ENCODE measurements at regions of chr7 and their contacts with region 1.

Region 1: DNA sequence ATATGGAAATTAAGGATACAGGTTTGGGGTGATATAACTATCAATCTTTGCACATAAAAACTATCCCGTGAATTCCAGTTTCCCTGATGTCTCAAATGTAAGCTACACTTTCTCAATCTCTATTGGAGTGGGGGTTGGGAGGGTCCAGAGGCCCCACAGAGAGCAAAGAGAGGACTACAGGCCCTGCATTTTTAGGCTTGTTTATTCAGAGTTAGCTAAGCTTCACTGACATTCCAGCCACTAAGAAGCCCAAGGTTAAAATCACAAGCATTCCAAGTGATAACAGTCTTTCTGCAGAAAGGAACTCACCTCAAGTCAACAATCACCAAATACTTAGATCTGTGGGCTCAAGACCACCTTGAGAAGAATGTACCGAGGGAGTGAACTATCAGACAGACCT is 31.6 kb upstream of the LAMB1 start:
- DNase-seq: peak; percentile 82 to 85
- H3K4me3 ChIP-seq: no peak overlapping the region
- H3K4me3 Mint-ChIP-seq: peak overlapping the region; percentile 64
- H3K27ac Mint-ChIP-seq: peak overlapping the region; percentile 82
- H3K4me1 ChIP-seq: peaks cover 71% of the 10 kb centered on the region
- H3K4me1 Mint-ChIP-seq: peaks cover 46% of the 10 kb centered on the region
- H3K27me3 ChIP-seq: no peaks in the 10 kb centered on the region
- H3K27me3 Mint-ChIP-seq: no peaks in the 10 kb centered on the region
- CTCF ChIP-seq: no peak

Region 2: GRCh38 chr7:107785926-107786325 is 248.7 kb before region 1 on chr7:
- CTCF ChIA-PET with region 1: no interaction called
- POLR2A ChIA-PET with region 1: no interaction called
- intact Hi-C with region 1: no loop called
- DNase-seq: no peak
- H3K4me3 ChIP-seq: no peak overlapping the region
- H3K4me3 Mint-ChIP-seq: no peak overlapping the region
- H3K27ac Mint-ChIP-seq: no peak overlapping the region
- H3K4me1 ChIP-seq: no peaks in the 10 kb centered on the region
- H3K4me1 Mint-ChIP-seq: no peaks in the 10 kb centered on the region
- H3K27me3 ChIP-seq: no peaks in the 10 kb centered on the region
- H3K27me3 Mint-ChIP-seq: no peaks in the 10 kb centered on the region
- CTCF ChIP-seq: no peak

Region 3: DNA sequence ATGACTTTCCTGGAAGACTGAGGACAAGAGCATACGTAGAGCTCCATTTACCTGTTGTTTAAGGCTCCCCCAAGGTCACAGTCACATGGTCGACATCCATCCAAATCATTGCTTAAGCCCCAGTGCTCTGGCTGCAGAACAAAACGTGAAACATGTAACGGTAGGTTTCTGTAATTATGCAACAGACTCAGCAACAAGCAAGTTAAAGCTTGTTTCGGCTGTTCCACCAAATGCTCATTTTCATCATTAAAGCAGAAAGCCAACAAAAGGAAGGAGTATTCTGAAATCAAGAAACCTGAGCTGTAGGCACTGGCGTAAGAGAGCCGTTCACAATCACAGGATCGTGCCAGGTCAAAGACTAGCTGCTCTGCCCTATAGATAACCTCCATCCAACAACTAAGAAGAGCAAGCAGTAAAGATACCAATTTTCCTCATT is 61.6 kb before region 1 on chr7:
- CTCF ChIA-PET with region 1: no interaction called
- POLR2A ChIA-PET with region 1: no interaction called
- intact Hi-C with region 1: no loop called
- DNase-seq: no peak
- H3K4me3 ChIP-seq: no peak overlapping the region
- H3K4me3 Mint-ChIP-seq: no peak overlapping the region
- H3K27ac Mint-ChIP-seq: no peak overlapping the region
- H3K4me1 ChIP-seq: peaks cover 41% of the 10 kb centered on the region
- H3K4me1 Mint-ChIP-seq: no peaks in the 10 kb centered on the region
- H3K27me3 ChIP-seq: no peaks in the 10 kb centered on the region
- H3K27me3 Mint-ChIP-seq: no peaks in the 10 kb centered on the region
- CTCF ChIP-seq: no peak

Region 4: DNA sequence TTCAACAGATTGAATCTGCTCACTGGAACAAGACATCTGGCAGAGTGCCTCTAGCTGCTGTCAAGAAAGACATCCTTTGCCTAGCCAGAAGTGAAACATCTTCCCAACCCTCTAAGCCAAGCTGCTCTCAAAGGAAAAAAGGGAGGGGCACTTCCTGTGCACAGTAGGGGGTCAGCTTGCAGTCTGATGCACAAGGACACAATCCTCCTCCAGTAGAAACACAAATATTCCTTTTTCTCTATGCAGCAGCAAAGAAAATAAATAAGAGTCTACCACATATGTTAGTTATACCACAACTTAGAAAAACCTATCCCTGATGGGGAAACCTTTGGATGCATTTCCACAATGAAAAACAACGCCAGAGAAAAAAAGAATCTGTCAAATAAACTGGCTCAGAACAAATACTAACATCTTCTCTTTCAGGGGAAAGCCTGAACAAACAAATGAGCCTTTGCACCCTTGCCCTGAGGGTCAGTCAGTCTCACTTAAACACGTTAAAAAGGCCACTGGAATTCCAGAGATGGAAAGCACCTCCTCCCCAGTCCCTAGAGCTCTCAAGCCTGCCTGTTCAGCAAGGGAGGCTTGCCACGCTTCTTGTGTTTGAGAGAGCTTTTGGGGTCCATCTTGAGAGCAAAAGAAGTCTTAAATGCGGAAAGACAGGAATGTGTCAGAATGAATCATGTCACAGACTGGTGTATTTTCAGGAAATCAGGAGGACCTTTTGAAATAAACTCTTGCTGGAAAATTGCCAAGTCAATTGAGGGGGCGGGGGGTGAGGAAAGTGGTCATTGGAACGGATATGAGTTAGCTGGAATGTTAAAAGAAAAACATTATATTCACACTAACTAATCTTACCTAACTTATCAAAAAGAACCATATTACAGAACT is 39.2 kb before region 1 on chr7:
- CTCF ChIA-PET with region 1: no interaction called
- POLR2A ChIA-PET with region 1: no interaction called
- intact Hi-C with region 1: loop called (anchors 1 kb)
- DNase-seq: peak; percentile 80 to 82
- H3K4me3 ChIP-seq: no peak overlapping the region
- H3K4me3 Mint-ChIP-seq: peak overlapping the region; percentile 69
- H3K27ac Mint-ChIP-seq: peak overlapping the region; percentile 86
- H3K4me1 ChIP-seq: peaks cover 62% of the 10 kb centered on the region
- H3K4me1 Mint-ChIP-seq: peaks cover 27% of the 10 kb centered on the region
- H3K27me3 ChIP-seq: no peaks in the 10 kb centered on the region
- H3K27me3 Mint-ChIP-seq: no peaks in the 10 kb centered on the region
- CTCF ChIP-seq: no peak

Region 5: DNA sequence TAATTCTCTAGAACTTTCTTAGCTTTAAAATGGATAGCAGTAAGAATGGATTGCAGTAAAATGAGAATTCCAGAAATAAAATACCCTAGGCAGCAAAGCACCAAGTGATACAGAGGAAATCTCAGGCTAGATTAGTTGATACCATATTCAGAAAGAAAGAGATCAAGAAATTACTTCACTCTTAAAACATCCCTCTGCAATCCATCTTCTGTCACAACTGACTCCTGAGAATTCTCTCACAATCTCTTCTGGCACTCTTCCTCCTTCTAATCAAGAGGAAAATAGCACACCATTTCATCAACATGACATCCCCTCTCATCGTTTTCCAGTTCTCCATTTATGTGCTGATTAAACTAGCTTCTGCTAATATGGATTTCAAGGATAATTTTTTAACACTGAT is 10.6 kb after region 1 on chr7:
- CTCF ChIA-PET with region 1: no interaction called
- POLR2A ChIA-PET with region 1: no interaction called
- intact Hi-C with region 1: loop called (anchors 1 kb)
- DNase-seq: no peak
- H3K4me3 ChIP-seq: no peak overlapping the region
- H3K4me3 Mint-ChIP-seq: no peak overlapping the region
- H3K27ac Mint-ChIP-seq: no peak overlapping the region
- H3K4me1 ChIP-seq: peaks cover 40% of the 10 kb centered on the region
- H3K4me1 Mint-ChIP-seq: peaks cover 44% of the 10 kb centered on the region
- H3K27me3 ChIP-seq: no peaks in the 10 kb centered on the region
- H3K27me3 Mint-ChIP-seq: no peaks in the 10 kb centered on the region
- CTCF ChIP-seq: no peak

Region 6: DNA sequence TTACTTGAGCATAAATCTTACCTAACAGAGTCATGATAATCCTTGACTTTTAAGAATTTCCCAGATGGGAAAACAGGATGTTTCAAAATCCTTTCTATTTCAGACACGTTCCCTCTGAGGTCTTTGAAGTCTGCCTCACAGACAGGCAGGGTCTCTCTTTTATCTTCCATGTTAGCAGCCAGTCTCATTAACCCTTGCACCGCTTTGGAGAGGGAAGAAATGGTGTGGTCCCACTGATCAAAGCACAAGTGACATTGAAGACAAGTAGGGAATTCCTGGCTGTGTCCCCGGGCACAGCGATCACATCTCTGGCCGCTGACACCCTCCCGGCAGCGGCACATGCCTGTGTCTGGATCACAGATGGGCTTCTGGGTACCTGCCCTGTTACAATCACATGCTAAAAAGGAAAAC is 21.0 kb after region 1 on chr7:
- CTCF ChIA-PET with region 1: interaction called, 5 read pairs
- POLR2A ChIA-PET with region 1: no interaction called
- intact Hi-C with region 1: loop called (anchors 2 kb)
- DNase-seq: peak; percentile 45 to 76
- H3K4me3 ChIP-seq: no peak overlapping the region
- H3K4me3 Mint-ChIP-seq: no peak overlapping the region
- H3K27ac Mint-ChIP-seq: peak overlapping the region; percentile 48
- H3K4me1 ChIP-seq: peaks cover 28% of the 10 kb centered on the region
- H3K4me1 Mint-ChIP-seq: peaks cover 37% of the 10 kb centered on the region
- H3K27me3 ChIP-seq: no peaks in the 10 kb centered on the region
- H3K27me3 Mint-ChIP-seq: no peaks in the 10 kb centered on the region
- CTCF ChIP-seq: no peak

Region 7: DNA sequence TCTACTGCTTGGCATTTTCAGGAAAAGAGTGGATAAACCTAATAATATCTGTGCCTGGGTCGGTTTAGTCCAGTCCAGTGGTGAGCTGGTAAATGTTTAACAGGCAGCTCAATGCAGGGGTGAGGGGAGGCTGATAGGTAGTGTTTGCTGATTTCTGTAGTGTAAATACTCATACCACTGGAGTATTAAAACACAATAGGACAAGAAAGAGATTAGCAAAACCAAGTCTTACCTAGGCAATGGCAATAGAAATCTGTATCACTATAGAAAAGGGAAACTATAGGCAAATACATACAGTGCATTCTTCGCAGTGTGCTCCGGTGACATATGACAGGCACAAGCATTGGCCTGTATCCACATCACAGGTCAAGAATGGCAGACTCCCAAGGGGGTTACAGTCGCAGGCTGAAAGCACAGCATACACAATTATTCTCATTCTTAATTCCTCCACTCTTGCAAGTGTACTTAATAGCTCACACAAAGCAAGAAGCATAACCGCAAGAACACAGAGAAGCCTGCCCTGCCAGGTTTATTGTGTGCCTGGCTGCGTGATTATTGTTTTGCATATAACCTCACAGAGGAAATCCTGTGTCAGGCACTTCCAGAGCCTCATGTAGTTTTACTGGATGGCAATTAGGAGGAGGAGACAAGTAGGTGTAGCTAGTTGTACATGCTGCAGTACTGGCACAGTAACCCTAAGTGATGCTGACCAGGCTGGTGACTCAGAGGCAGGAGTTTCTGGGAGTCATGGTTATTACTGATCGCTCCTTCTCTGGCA is 60.5 kb after region 1 on chr7:
- CTCF ChIA-PET with region 1: interaction called, 3 read pairs
- POLR2A ChIA-PET with region 1: no interaction called
- intact Hi-C with region 1: loop called (anchors 1 kb)
- DNase-seq: peak; percentile 86 to 89
- H3K4me3 ChIP-seq: no peak overlapping the region
- H3K4me3 Mint-ChIP-seq: peak overlapping the region; percentile 62
- H3K27ac Mint-ChIP-seq: peak overlapping the region; percentile 63
- H3K4me1 ChIP-seq: peaks cover 76% of the 10 kb centered on the region
- H3K4me1 Mint-ChIP-seq: peaks cover 54% of the 10 kb centered on the region
- H3K27me3 ChIP-seq: no peaks in the 10 kb centered on the region
- H3K27me3 Mint-ChIP-seq: no peaks in the 10 kb centered on the region
- CTCF ChIP-seq: no peak